Heart left ventricle (tissue), 16 donors: ENCODE measurements at regions of chr9 and their contacts with region 1.

Region 1: GRCh38 chr9:70419546-70420266 is 5.2 kb upstream of the KLF9 start:
- DNase-seq: peak; percentile 96 to 98 (median 96)
- ATAC-seq: peak; percentile 51 to 76 (median 74)
- H3K4me3 ChIP-seq: peak overlapping the region; percentile 19 to 81 (median 58)
- H3K27ac ChIP-seq: peak overlapping the region; percentile 98 to 100 (median 100)
- H3K4me1 ChIP-seq: peaks cover 24 to 67% (median 53%) of the 10 kb centered on the region in 12 donors
- H3K27me3 ChIP-seq: no peaks in the 10 kb centered on the region
- CTCF ChIP-seq: peak in 2 of 12 donors; percentile 17 to 36
- POLR2A ChIP-seq: peak in 1 of 2 donors; percentile 77

Region 2: GRCh38 chr9:70382709-70383605 is 36.7 kb before region 1 on chr9:
- intact Hi-C with region 1: no loop called
- DNase-seq: no peak
- ATAC-seq: peak in 3 of 4 donors; percentile 12 to 38 (median 21)
- H3K4me3 ChIP-seq: no peak overlapping the region
- H3K27ac ChIP-seq: peak overlapping the region in 1 of 12 donors; percentile 33
- H3K4me1 ChIP-seq: peaks cover 0 to 62% (median 25%) of the 10 kb centered on the region in 12 donors
- H3K27me3 ChIP-seq: no peaks in the 10 kb centered on the region
- CTCF ChIP-seq: no peak
- POLR2A ChIP-seq: no peak

Region 3: GRCh38 chr9:70438341-70438928 is 18.7 kb after region 1 on chr9:
- intact Hi-C with region 1: loop called in 1 of 10 experiments (anchors 2 kb)
- DNase-seq: peak; percentile 61 to 86 (median 63)
- ATAC-seq: peak; percentile 86 to 97 (median 92)
- H3K4me3 ChIP-seq: no peak overlapping the region
- H3K27ac ChIP-seq: peak overlapping the region; percentile 21 to 78 (median 71)
- H3K4me1 ChIP-seq: peaks cover 0 to 47% (median 25%) of the 10 kb centered on the region in 12 donors
- H3K27me3 ChIP-seq: no peaks in the 10 kb centered on the region
- CTCF ChIP-seq: no peak
- POLR2A ChIP-seq: no peak

Region 4: DNA sequence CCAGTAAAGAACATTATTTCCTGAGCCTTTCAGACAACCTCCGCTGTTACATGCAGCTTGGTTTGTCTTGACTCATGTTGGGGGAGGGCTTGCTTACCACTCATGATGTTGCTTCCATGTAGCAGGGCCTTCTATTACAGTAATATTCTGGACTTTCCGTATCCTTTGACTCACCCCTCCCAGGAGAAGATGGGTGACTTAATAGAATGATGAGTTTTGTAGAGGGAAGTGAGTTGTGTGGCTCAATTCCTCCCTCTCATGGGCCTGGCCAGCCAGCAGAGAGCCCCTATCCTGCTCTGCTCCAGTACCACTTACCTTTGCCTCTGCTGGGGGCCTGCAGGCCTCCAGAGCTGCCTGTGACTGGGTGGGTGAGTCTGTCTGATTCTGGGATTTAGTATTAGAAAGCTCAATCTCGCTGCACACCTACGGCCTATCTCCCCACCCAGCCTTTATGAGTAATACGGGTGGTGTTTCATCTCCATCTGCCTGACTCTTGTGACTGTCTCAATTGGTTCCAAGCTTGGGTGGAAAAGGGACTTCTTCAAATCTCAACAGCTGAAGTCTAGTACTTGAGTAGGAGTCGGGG is 47.4 kb after region 1 on chr9:
- intact Hi-C with region 1: loop called in 4 of 10 experiments (anchors 1 to 5 kb)
- DNase-seq: no peak
- ATAC-seq: peak in 2 of 4 donors; percentile 31 to 40
- H3K4me3 ChIP-seq: no peak overlapping the region
- H3K27ac ChIP-seq: peak overlapping the region in 4 of 12 donors; percentile 1 to 78 (median 70)
- H3K4me1 ChIP-seq: peaks cover 15 to 59% (median 36%) of the 10 kb centered on the region in 12 donors
- H3K27me3 ChIP-seq: no peaks in the 10 kb centered on the region
- CTCF ChIP-seq: no peak
- POLR2A ChIP-seq: no peak